Activated CD4-positive, alpha-beta T cell treated with anti-CD3 and anti-CD28 coated beads for 36 hours (primary cell): ENCODE measurements at regions of chr3 and their contacts with region 1.

Region 1: GRCh38 chr3:111936191-111936841 is 42.5 kb upstream of the ABHD10 start:
- DNase-seq: no peak
- ATAC-seq: no peak
- H3K4me3 Mint-ChIP-seq: no peak overlapping the region
- H3K27ac Mint-ChIP-seq: no peak overlapping the region
- H3K4me1 Mint-ChIP-seq: no peaks in the 10 kb centered on the region
- H3K27me3 Mint-ChIP-seq: no peaks in the 10 kb centered on the region

Region 2: GRCh38 chr3:111913163-111913763 is 23.1 kb before region 1 on chr3:
- CTCF ChIA-PET with region 1: interaction called, 3 read pairs
- POLR2A ChIA-PET with region 1: no interaction called
- intact Hi-C with region 1: loop called in 1 of 2 experiments (anchors 2 kb)
- DNase-seq: no peak
- ATAC-seq: no peak
- H3K4me3 Mint-ChIP-seq: no peak overlapping the region
- H3K27ac Mint-ChIP-seq: no peak overlapping the region
- H3K4me1 Mint-ChIP-seq: no peaks in the 10 kb centered on the region
- H3K27me3 Mint-ChIP-seq: no peaks in the 10 kb centered on the region

Region 3: GRCh38 chr3:111952836-111953469 is 16.6 kb after region 1 on chr3:
- CTCF ChIA-PET with region 1: interaction called, 5 read pairs
- POLR2A ChIA-PET with region 1: no interaction called
- intact Hi-C with region 1: loop called in 1 of 2 experiments (anchors 2 kb)
- DNase-seq: no peak
- ATAC-seq: no peak
- H3K4me3 Mint-ChIP-seq: no peak overlapping the region
- H3K27ac Mint-ChIP-seq: no peak overlapping the region
- H3K4me1 Mint-ChIP-seq: no peaks in the 10 kb centered on the region
- H3K27me3 Mint-ChIP-seq: no peaks in the 10 kb centered on the region